ENCODE measurements at regions of chr9 and their contacts with region 1.

Region 1: GRCh38 chr9:37903647-37904444 is at the start of gene SLC25A51:
- DNase-seq: peak; percentile 92
- H3K4me3 Mint-ChIP-seq: peak within 1 kb of the TSS; percentile 90
- H3K27ac Mint-ChIP-seq: peak within 1 kb of the TSS; percentile 94
- H3K4me1 Mint-ChIP-seq: peaks cover 35% of the 10 kb centered on the region
- H3K27me3 Mint-ChIP-seq: peaks cover 5% of the 10 kb centered on the region
- total RNA-seq, gene SLC25A51: 30.0 and 31.3 TPM in 2 replicates

Region 2: DNA sequence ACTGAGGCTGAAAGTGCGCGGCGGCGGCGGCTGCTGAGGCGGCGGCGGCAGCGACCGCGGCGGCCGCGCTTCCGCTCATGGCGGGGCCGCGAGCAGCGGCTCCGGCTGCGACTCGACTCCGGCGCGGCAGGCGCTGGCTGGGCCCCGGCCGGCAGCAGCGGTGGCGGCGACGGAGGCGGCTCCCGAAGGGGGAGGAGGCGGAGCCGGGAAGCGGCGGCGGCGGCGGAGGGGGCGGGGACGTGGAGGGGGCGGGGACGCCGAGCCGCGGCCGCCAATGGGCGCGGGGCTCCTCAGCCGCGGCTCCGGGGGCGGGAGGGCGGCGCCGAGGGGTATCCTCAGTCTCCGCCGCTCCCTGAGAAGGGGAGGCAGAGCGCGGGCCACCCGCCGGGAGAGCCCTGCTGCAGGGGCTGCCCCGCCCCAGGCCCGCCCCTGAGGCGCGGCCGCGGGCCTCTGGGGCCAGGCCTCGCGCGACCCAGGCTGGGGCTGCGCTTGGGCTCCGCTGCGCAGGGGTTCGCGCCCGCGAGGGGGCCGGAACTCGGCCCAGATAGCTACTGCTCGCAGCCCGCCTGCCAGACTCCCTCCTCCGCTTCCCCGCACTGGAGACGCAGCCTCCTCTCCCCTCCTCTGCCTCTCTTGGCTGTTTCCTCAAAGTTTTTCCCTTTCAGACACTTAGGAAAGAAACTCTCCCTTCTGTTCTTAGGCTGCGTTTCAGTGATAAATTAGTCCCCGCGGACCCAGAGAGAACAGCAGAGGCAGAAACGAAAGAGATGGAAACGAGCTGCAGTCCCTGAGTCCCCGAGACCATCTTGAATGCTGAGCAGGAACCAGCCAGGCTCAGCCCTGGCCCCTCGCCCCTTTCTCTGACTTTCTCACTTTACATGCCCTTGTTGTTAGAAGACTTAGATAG is 1416.1 kb before region 1 on chr9:
- intact Hi-C with region 1: loop called (anchors 10 kb)
- DNase-seq: peak; percentile 91
- H3K4me3 Mint-ChIP-seq: peak overlapping the region; percentile 87
- H3K27ac Mint-ChIP-seq: peak overlapping the region; percentile 87
- H3K4me1 Mint-ChIP-seq: peaks cover 53% of the 10 kb centered on the region
- H3K27me3 Mint-ChIP-seq: no peaks in the 10 kb centered on the region

Region 3: GRCh38 chr9:37485389-37486219 is 418.2 kb before region 1 on chr9 and contains the start of gene POLR1E:
- intact Hi-C with region 1: loop called (anchors 1 kb)
- DNase-seq: peak; percentile 95
- H3K4me3 Mint-ChIP-seq: peak within 1 kb of the TSS; percentile 96
- H3K27ac Mint-ChIP-seq: peak within 1 kb of the TSS; percentile 92
- H3K4me1 Mint-ChIP-seq: peaks cover 31% of the 10 kb centered on the region
- H3K27me3 Mint-ChIP-seq: peaks cover 8% of the 10 kb centered on the region
- total RNA-seq, gene POLR1E: 59.8 and 61.0 TPM in 2 replicates

Region 4: DNA sequence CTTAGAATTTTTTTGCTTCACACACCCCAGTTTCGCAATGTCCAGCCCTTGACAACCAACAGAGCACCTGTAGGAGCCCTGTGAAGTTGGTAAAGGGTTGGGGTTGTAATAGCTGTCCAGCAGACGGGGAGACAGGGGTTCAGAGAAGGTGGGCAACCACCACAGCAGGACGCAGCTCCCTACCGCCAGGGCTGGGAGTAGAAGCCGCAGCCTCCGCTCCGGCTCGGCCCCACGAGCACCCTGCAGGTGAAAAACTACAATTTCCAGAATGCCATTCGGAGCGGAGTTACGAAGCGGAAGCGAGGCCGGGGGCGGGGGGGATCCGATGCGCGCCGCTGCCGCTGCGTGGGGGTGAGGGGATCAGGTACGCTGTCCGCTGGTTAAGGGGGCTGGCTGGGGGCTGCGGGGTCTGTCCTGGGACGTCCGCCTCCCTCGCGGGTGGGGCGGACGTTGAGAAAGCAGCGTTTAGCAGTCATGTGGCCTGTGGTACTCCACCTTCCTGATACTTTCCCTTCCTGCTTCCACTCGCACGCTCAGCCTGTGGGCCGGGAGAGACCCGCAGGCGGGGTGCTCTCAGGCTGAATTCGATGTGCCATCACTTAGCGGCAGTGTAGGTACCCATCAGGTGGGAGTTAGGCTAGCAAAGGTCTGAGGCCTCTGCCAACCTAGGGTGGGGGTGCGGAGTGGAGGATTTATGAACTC is 150.2 kb before region 1 on chr9 and contains the start of gene TRMT10B:
- intact Hi-C with region 1: loop called (anchors 1 kb)
- DNase-seq: peak; percentile 65
- H3K4me3 Mint-ChIP-seq: peak within 1 kb of the TSS; percentile 95
- H3K27ac Mint-ChIP-seq: peak within 1 kb of the TSS; percentile 82
- H3K4me1 Mint-ChIP-seq: peaks cover 27% of the 10 kb centered on the region
- H3K27me3 Mint-ChIP-seq: no peaks in the 10 kb centered on the region
- total RNA-seq, gene TRMT10B: 10.0 and 11.8 TPM in 2 replicates

Region 5: GRCh38 chr9:37800631-37801286 is 103.1 kb before region 1 on chr9 and contains the start of gene DCAF10:
- intact Hi-C with region 1: loop called (anchors 1 kb)
- DNase-seq: peak; percentile 88
- H3K4me3 Mint-ChIP-seq: peak within 1 kb of the TSS; percentile 90
- H3K27ac Mint-ChIP-seq: peak within 1 kb of the TSS; percentile 80
- H3K4me1 Mint-ChIP-seq: peaks cover 39% of the 10 kb centered on the region
- H3K27me3 Mint-ChIP-seq: no peaks in the 10 kb centered on the region
- total RNA-seq, gene DCAF10: 18.5 and 19.4 TPM in 2 replicates

Region 6: GRCh38 chr9:37938121-37938891 is 34.5 kb after region 1 on chr9:
- intact Hi-C with region 1: no loop called
- DNase-seq: no peak
- H3K4me3 Mint-ChIP-seq: no peak overlapping the region
- H3K27ac Mint-ChIP-seq: no peak overlapping the region
- H3K4me1 Mint-ChIP-seq: no peaks in the 10 kb centered on the region
- H3K27me3 Mint-ChIP-seq: no peaks in the 10 kb centered on the region

Region 7: GRCh38 chr9:38068866-38069629 is 165.2 kb after region 1 on chr9 and contains the start of gene SHB:
- intact Hi-C with region 1: loop called (anchors 1 kb)
- DNase-seq: peak; percentile 65
- H3K4me3 Mint-ChIP-seq: peak within 1 kb of the TSS; percentile 78
- H3K27ac Mint-ChIP-seq: peak within 1 kb of the TSS; percentile 4
- H3K4me1 Mint-ChIP-seq: peaks cover 23% of the 10 kb centered on the region
- H3K27me3 Mint-ChIP-seq: peaks cover 30% of the 10 kb centered on the region
- total RNA-seq, gene SHB: 1.2 and 1.7 TPM in 2 replicates